K562 (cell line): ENCODE measurements at regions of chr11 and their contacts with region 1.

Region 1: GRCh38 chr11:117327567-117328374 is at the start of gene CEP164:
- DNase-seq: peak; percentile 95 to 98 (median 96)
- ATAC-seq: peak; percentile 96
- H3K4me3 ChIP-seq: peak within 1 kb of the TSS; percentile 76
- H3K27ac ChIP-seq: peak within 1 kb of the TSS; percentile 73
- H3K4me1 ChIP-seq: peaks cover 5 to 10% of the 10 kb centered on the region in 2 experiments; a peak in 4 of 5 replicates
- H3K27me3 ChIP-seq: no peaks in the 10 kb centered on the region
- CTCF ChIP-seq: no peak
- EP300 ChIP-seq: peak; percentile 66; the same call in 1 of the 2 replicates
- POLR2A ChIP-seq: peak; percentile 79
- RAD21 ChIP-seq: no peak
- polyA plus RNA-seq, gene CEP164: 2.1 to 4.6 TPM

Region 2: GRCh38 chr11:117152066-117152465 is 175.7 kb before region 1 on chr11:
- CTCF ChIA-PET with region 1: no interaction called
- POLR2A ChIA-PET with region 1: no interaction called
- in situ Hi-C with region 1: no loop called
- intact Hi-C with region 1: no loop called
- DNase-seq: no peak
- ATAC-seq: no peak
- H3K4me3 ChIP-seq: no peak overlapping the region
- H3K27ac ChIP-seq: no peak overlapping the region
- H3K4me1 ChIP-seq: peaks cover 2 to 4% of the 10 kb centered on the region in 2 experiments; a peak in 1 of 5 replicates
- H3K27me3 ChIP-seq: no peaks in the 10 kb centered on the region
- CTCF ChIP-seq: no peak
- EP300 ChIP-seq: no peak
- POLR2A ChIP-seq: no peak
- RAD21 ChIP-seq: no peak

Region 3: GRCh38 chr11:117221775-117222517 is 105.8 kb before region 1 on chr11:
- CTCF ChIA-PET with region 1: no interaction called
- POLR2A ChIA-PET with region 1: no interaction called
- in situ Hi-C with region 1: no loop called
- intact Hi-C with region 1: no loop called
- DNase-seq: no peak
- ATAC-seq: no peak
- H3K4me3 ChIP-seq: no peak overlapping the region
- H3K27ac ChIP-seq: no peak overlapping the region; the same call in 2 of the 3 replicates
- H3K4me1 ChIP-seq: peaks cover 56 to 58% of the 10 kb centered on the region in 2 experiments; a peak in 4 of 5 replicates
- H3K27me3 ChIP-seq: no peaks in the 10 kb centered on the region
- CTCF ChIP-seq: peak in 1 of 3 experiments; percentile 16; a peak in 1 of 6 replicates
- EP300 ChIP-seq: no peak
- POLR2A ChIP-seq: no peak
- RAD21 ChIP-seq: peak in 1 of 2 experiments; percentile 9; a peak in 1 of 4 replicates

Region 4: DNA sequence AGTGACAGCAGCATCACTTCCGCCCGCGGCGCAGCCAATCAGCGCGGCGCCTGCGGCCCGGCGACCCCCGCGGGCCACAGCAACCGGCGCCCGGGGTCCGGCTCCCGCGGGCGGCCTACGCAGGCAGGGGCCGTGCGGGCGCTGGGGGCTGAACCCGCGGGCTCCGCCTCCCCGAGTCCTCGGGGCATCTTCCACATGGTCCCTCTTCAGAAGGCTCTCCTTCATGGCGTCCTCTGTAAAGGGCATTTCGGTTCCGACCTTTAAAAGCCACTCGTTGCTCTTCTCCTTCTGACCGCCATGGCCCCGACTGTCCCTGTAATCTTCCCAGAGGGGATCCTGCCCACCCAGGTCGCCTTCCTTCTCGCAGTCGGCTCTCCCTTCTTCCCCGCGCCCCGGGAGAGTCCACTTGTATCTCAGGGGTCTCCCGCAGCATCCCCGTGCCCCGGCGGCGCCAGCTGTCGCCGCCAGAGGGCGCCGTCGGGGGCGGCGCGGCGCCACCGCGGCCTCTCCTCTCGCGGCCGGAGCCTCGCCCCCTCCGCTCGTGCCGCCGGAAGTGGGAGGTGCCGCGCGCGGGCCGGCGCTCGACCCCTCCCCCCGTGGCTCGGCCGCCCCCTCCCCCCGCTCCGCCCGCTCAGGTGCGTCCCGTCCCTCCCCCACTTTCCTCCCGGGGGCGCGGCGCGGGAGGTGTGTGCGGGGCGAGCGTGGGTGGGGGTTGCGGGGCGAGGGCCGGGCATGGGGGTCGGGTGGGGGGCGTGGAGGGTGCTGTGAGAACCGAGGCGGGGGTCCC is 95.5 kb before region 1 on chr11 and contains the start of gene RNF214:
- CTCF ChIA-PET with region 1: no interaction called
- POLR2A ChIA-PET with region 1: interaction called, 3 read pairs
- in situ Hi-C with region 1: no loop called
- intact Hi-C with region 1: loop called (anchors 5 kb)
- DNase-seq: peak; percentile 84 to 96 (median 96)
- ATAC-seq: peak; percentile 90
- H3K4me3 ChIP-seq: peak within 1 kb of the TSS; percentile 85
- H3K27ac ChIP-seq: peak within 1 kb of the TSS; percentile 94
- H3K4me1 ChIP-seq: peaks cover 11 to 18% of the 10 kb centered on the region in 2 experiments; a peak in 3 of 5 replicates
- H3K27me3 ChIP-seq: no peaks in the 10 kb centered on the region
- CTCF ChIP-seq: peak; percentile 81 to 83 (median 82)
- EP300 ChIP-seq: peak; percentile 29; the same call in 1 of the 2 replicates
- POLR2A ChIP-seq: peak; percentile 83
- RAD21 ChIP-seq: peak; percentile 48 to 51; a peak in 2 of 4 replicates
- polyA plus RNA-seq, gene RNF214: 6.6 to 7.4 TPM

Region 5: GRCh38 chr11:117345039-117345438 is 17.3 kb after region 1 on chr11:
- CTCF ChIA-PET with region 1: no interaction called
- POLR2A ChIA-PET with region 1: interaction called, 42 read pairs
- in situ Hi-C with region 1: no loop called
- intact Hi-C with region 1: no loop called
- DNase-seq: no peak
- ATAC-seq: no peak
- H3K4me3 ChIP-seq: no peak overlapping the region
- H3K27ac ChIP-seq: no peak overlapping the region
- H3K4me1 ChIP-seq: no peaks in the 10 kb centered on the region
- H3K27me3 ChIP-seq: no peaks in the 10 kb centered on the region
- CTCF ChIP-seq: no peak
- EP300 ChIP-seq: no peak
- POLR2A ChIP-seq: no peak
- RAD21 ChIP-seq: no peak